Activated CD8-positive, alpha-beta T cell treated with anti-CD3 and anti-CD28 coated beads, Interleukin-2, amount 10 ng/mL, durations not matched to agents 7 days and 5 days (primary cell): ENCODE measurements at regions of chr5 and their contacts with region 1.

Region 1: DNA sequence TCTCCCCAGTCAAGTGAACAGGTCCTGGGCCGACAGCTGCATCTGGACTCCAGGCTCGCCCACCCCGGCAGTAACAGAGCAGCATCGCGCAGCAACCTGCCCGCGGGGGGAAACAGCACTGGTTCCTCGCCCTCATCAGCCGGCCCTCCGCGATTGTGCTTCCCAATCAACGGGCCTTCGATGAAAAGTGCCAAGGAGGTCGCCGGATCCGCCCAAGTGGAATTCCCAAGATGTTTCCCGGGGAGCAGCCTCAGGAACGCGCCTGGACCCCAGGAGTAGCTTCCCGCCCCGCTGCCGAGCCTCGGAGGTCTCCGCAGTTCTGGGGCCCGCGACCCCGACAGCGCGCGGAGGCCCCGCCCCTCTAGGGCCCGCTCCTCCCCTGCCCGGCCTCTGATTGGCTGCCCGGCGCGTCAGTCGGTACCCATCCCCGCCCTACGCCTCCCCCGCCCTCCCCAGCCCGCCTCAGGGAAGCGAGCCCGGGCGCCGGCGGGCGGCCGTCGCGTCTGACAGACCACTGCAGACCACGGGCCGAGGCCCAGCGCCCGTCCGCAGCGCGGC is at the start of gene OTULINL:
- DNase-seq: peak; percentile 91
- ATAC-seq: peak; percentile 91
- H3K4me3 Mint-ChIP-seq: peak within 1 kb of the TSS; percentile 84
- H3K27ac Mint-ChIP-seq: peak within 1 kb of the TSS; percentile 87
- H3K4me1 Mint-ChIP-seq: peaks cover 43% of the 10 kb centered on the region
- H3K27me3 Mint-ChIP-seq: peaks cover 15% of the 10 kb centered on the region
- total RNA-seq, gene OTULINL: 59.6 to 68.3 TPM

Region 2: GRCh38 chr5:14415024-14415697 is 166.3 kb before region 1 on chr5:
- CTCF ChIA-PET with region 1: interaction called, 16 read pairs
- POLR2A ChIA-PET with region 1: interaction called, 41 read pairs
- DNase-seq: peak; percentile 60
- ATAC-seq: peak; percentile 59
- H3K4me3 Mint-ChIP-seq: peak overlapping the region; percentile 71
- H3K27ac Mint-ChIP-seq: peak overlapping the region; percentile 94
- H3K4me1 Mint-ChIP-seq: peaks cover 63% of the 10 kb centered on the region
- H3K27me3 Mint-ChIP-seq: no peaks in the 10 kb centered on the region